Mammary epithelial cell (primary cell): ENCODE measurements at regions of chr5 and their contacts with region 1.

Region 1: DNA sequence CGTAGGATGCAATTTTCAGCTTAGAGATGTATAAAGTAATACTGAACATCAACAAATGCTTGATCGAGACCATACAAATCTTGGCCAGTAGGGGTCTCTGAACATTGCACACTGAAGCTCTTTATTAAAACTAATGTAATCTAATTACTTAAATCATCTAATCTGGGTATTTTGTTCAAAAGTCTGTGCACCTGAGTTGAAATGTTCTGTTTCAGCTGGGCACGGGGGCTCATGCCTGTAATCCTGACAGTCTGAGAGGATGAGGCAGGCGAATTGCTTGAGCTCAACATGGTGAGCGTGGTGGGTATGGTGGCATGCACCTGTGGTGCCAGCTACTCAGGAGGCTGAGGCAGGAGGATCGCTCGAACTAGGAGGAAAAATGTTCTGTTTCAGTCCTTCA is 41.0 kb downstream of the ESM1 start:
- DNase-seq: peak; percentile 17
- H3K4me3 ChIP-seq: no peak overlapping the region
- H3K27ac ChIP-seq: no peak overlapping the region
- H3K4me1 ChIP-seq: no peaks in the 10 kb centered on the region
- H3K27me3 ChIP-seq: peaks cover 2% of the 10 kb centered on the region
- CTCF ChIP-seq: peak; percentile 63 to 67

Region 2: GRCh38 chr5:54889826-54890225 is 54.5 kb before region 1 on chr5:
- CTCF ChIA-PET with region 1: no interaction called
- dilution Hi-C with region 1: loop called (anchors 5 kb)
- in situ Hi-C with region 1: no loop called
- intact Hi-C with region 1: no loop called
- DNase-seq: peak; percentile 70
- H3K4me3 ChIP-seq: no peak overlapping the region
- H3K27ac ChIP-seq: no peak overlapping the region
- H3K4me1 ChIP-seq: peaks cover 11% of the 10 kb centered on the region
- H3K27me3 ChIP-seq: peaks cover 6% of the 10 kb centered on the region
- CTCF ChIP-seq: no peak

Region 3: DNA sequence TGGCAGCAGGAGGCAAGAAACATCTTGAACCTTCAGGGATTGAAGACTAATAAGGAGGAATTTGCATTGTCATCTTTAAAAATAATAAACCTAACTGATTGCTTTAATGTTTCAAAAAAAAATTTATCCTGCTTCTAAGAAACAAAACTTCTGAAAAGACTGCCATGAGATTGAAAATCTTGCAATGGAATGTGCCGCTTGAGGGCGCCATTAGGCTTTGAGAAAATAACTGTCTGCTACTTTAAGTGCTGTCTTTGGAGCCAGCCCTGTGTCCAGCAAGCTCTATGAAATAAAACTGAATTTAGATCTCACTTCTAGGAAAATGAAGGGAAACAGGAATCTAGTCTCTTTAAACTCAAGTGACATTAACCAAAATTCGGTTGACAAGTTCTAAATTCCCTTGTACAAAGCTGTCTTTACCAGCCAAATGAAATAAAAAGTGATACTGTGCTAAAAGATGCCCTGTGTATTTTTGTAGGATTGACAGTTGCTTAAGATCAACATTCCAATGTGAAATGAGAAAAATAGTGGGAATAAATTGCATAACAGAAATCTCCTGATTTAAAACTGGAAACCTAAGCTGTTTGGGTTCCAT is 38.3 kb before region 1 on chr5:
- CTCF ChIA-PET with region 1: interaction called, 4 read pairs
- dilution Hi-C with region 1: no loop called
- in situ Hi-C with region 1: no loop called
- intact Hi-C with region 1: loop called (anchors 1 kb)
- DNase-seq: peak; percentile 38
- H3K4me3 ChIP-seq: no peak overlapping the region
- H3K27ac ChIP-seq: no peak overlapping the region
- H3K4me1 ChIP-seq: no peaks in the 10 kb centered on the region
- H3K27me3 ChIP-seq: no peaks in the 10 kb centered on the region
- CTCF ChIP-seq: peak; percentile 74 to 76

Region 4: DNA sequence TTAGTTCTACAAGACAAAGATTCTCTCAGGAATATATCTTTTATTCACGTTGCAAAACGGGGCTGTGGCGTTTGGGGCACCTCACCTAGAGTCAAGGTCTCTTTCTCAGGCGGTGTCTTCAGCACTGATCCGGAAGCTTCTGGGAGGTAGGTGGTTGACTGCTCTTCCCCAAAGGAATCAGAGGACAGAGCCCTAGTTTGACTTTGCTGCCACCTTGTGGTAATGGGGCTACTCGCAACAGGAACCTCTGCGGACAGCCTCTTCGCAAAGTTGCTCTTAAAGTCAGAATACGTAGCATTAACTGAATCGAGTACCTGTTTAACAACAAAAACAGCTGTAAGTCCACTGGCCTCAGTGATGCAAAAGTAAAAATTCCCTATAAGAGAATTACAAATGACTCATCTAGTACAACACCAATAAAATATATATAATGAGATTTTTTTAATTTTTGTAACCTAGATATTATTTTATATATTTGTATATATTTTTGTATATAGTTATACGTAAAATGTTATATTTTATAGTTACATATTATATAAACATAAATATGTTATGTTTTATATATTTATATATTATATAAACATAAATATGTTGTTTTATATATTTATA is 202.3 kb after region 1 on chr5:
- CTCF ChIA-PET with region 1: interaction called, 15 read pairs
- dilution Hi-C with region 1: no loop called
- in situ Hi-C with region 1: loop called (anchors 5 to 10 kb)
- intact Hi-C with region 1: loop called (anchors 1 kb)
- DNase-seq: peak; percentile 77
- H3K4me3 ChIP-seq: no peak overlapping the region
- H3K27ac ChIP-seq: no peak overlapping the region
- H3K4me1 ChIP-seq: no peaks in the 10 kb centered on the region
- H3K27me3 ChIP-seq: no peaks in the 10 kb centered on the region
- CTCF ChIP-seq: peak; percentile 89 to 98

Region 5: GRCh38 chr5:55159763-55160492 is 215.6 kb after region 1 on chr5 and contains the start of gene GPX8:
- CTCF ChIA-PET with region 1: interaction called, 31 read pairs
- dilution Hi-C with region 1: no loop called
- in situ Hi-C with region 1: no loop called
- intact Hi-C with region 1: loop called (anchors 1 kb)
- DNase-seq: peak; percentile 78
- H3K4me3 ChIP-seq: peak within 1 kb of the TSS; percentile 56 to 93 (median 92)
- H3K27ac ChIP-seq: peak within 1 kb of the TSS; percentile 90
- H3K4me1 ChIP-seq: peaks cover 8% of the 10 kb centered on the region
- H3K27me3 ChIP-seq: no peaks in the 10 kb centered on the region
- CTCF ChIP-seq: peak; percentile 49 to 63
- total RNA-seq, gene GPX8: 38.0 to 38.8 TPM